ENCODE measurements at regions of chr17 and their contacts with region 1.

Region 1: GRCh38 chr17:36198831-36199465 is 2.4 kb upstream of the CCL3L1 start:
- DNase-seq: no peak
- ATAC-seq: peak in 1 of 4 donors; percentile 39
- H3K4me3 ChIP-seq: no peak overlapping the region
- H3K27ac ChIP-seq: no peak overlapping the region
- H3K4me1 ChIP-seq: peaks cover 0 to 14% (median 0%) of the 10 kb centered on the region in 12 donors
- H3K27me3 ChIP-seq: peaks cover 0 to 23% (median 0%) of the 10 kb centered on the region in 9 donors
- CTCF ChIP-seq: no peak
- POLR2A ChIP-seq: no peak

Region 2: GRCh38 chr17:36127199-36127893 is 71.6 kb before region 1 on chr17:
- intact Hi-C with region 1: loop called in 1 of 10 experiments (anchors 10 kb)
- DNase-seq: no peak
- ATAC-seq: no peak
- H3K4me3 ChIP-seq: no peak overlapping the region
- H3K27ac ChIP-seq: no peak overlapping the region
- H3K4me1 ChIP-seq: peaks cover 0 to 13% (median 0%) of the 10 kb centered on the region in 12 donors
- H3K27me3 ChIP-seq: no peaks in the 10 kb centered on the region
- CTCF ChIP-seq: no peak
- POLR2A ChIP-seq: no peak

Region 3: GRCh38 chr17:36183001-36183971 is 15.7 kb before region 1 on chr17:
- intact Hi-C with region 1: no loop called
- DNase-seq: peak; percentile 72 to 93 (median 81)
- ATAC-seq: peak in 3 of 4 donors; percentile 81 to 95 (median 90)
- H3K4me3 ChIP-seq: peak overlapping the region; percentile 30 to 75 (median 62)
- H3K27ac ChIP-seq: peak overlapping the region in 8 of 12 donors; percentile 23 to 78 (median 60)
- H3K4me1 ChIP-seq: peaks cover 0 to 21% (median 2%) of the 10 kb centered on the region in 12 donors
- H3K27me3 ChIP-seq: peaks cover 0 to 45% (median 0%) of the 10 kb centered on the region in 9 donors
- CTCF ChIP-seq: peak in 1 of 12 donors; percentile 16
- POLR2A ChIP-seq: no peak